ENCODE measurements at regions of chr2 and their contacts with region 1.

Region 1: DNA sequence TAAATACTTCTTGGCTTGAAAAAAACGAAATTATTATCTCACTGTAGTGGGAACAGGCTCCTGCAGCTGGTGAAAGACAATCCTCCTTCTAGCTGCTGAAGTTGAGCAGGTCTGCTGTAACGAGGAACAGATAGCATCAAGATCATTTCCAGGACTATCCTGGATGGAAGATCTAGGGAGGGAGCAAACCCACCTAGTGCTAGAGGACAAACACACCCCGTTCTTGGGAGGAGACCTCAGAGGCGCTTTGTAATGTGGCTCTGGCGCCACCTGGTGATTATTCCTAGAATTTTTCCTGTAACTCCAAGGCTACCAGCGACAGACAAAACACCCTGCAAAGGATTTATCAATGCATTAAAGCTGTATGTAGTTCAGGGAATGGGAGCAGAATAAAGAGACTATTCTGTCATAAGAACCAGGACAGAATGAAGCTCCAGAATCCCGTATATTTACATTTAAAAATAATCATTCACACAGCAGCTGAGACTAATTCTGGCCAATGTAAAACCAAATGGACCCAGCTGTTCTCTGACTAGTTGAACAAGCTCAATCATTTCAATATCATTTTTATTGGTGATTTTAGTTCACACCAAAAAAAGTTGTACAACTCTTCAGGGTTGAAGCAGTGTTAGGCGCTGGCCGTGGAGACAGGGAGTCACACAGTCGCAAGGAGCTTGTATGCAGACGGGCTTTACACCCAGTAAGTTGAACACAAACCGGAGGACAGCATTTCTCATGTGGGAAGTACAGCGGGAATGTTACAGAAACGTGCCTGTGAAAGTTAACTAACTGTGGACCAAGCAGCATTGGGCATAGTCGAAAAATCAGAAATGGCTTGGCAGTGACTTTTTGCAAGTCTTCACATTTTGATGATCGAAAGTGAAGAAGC is 290.3 kb downstream of the TRIB2 start:
- DNase-seq: peak; percentile 62
- ATAC-seq: peak; percentile 98
- H3K4me3 ChIP-seq: no peak overlapping the region
- H3K27ac ChIP-seq: no peak overlapping the region
- H3K4me1 ChIP-seq: no peaks in the 10 kb centered on the region
- H3K27me3 ChIP-seq: no peaks in the 10 kb centered on the region
- CTCF ChIP-seq: peak; percentile 88
- EP300 ChIP-seq: no peak
- POLR2A ChIP-seq: no peak
- RAD21 ChIP-seq: peak; percentile 74

Region 2: GRCh38 chr2:11863513-11864328 is 1143.4 kb before region 1 on chr2:
- CTCF ChIA-PET with region 1: interaction called, 3 read pairs
- POLR2A ChIA-PET with region 1: no interaction called
- in situ Hi-C with region 1: no loop called
- intact Hi-C with region 1: loop called (anchors 1 kb)
- DNase-seq: peak; percentile 86
- ATAC-seq: peak; percentile 96
- H3K4me3 ChIP-seq: no peak overlapping the region
- H3K27ac ChIP-seq: no peak overlapping the region
- H3K4me1 ChIP-seq: peaks cover 15% of the 10 kb centered on the region; the same call in 1 of the 2 replicates
- H3K27me3 ChIP-seq: peaks cover 0 to 20% of the 10 kb centered on the region in 2 experiments; a peak in 2 of 5 replicates
- CTCF ChIP-seq: peak; percentile 97
- EP300 ChIP-seq: no peak
- POLR2A ChIP-seq: no peak
- RAD21 ChIP-seq: peak; percentile 77

Region 3: DNA sequence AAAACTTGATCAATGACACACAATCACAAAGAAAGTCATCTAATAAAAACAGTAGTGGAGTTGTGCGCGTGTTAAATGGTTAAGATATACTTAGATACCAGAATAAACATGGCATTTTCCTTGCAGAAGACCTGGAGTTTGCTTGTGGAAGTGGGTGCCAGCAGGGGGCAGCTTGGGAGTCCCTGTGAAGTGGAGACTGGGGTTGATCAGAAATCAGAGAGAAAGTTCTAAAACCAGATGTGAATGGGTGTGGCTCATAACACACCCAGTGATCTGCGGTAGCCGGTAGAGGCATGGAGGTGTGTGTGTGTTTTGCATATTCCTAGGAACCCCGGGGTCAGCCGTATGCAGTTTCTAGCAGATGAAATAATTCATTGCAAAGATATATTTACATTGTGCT is 590.5 kb before region 1 on chr2:
- CTCF ChIA-PET with region 1: interaction called, 3 read pairs
- POLR2A ChIA-PET with region 1: no interaction called
- in situ Hi-C with region 1: no loop called
- intact Hi-C with region 1: loop called (anchors 1 kb)
- DNase-seq: peak; percentile 11
- ATAC-seq: peak; percentile 65
- H3K4me3 ChIP-seq: no peak overlapping the region
- H3K27ac ChIP-seq: no peak overlapping the region
- H3K4me1 ChIP-seq: no peaks in the 10 kb centered on the region
- H3K27me3 ChIP-seq: no peaks in the 10 kb centered on the region
- CTCF ChIP-seq: peak; percentile 52
- EP300 ChIP-seq: no peak
- POLR2A ChIP-seq: no peak
- RAD21 ChIP-seq: no peak

Region 4: DNA sequence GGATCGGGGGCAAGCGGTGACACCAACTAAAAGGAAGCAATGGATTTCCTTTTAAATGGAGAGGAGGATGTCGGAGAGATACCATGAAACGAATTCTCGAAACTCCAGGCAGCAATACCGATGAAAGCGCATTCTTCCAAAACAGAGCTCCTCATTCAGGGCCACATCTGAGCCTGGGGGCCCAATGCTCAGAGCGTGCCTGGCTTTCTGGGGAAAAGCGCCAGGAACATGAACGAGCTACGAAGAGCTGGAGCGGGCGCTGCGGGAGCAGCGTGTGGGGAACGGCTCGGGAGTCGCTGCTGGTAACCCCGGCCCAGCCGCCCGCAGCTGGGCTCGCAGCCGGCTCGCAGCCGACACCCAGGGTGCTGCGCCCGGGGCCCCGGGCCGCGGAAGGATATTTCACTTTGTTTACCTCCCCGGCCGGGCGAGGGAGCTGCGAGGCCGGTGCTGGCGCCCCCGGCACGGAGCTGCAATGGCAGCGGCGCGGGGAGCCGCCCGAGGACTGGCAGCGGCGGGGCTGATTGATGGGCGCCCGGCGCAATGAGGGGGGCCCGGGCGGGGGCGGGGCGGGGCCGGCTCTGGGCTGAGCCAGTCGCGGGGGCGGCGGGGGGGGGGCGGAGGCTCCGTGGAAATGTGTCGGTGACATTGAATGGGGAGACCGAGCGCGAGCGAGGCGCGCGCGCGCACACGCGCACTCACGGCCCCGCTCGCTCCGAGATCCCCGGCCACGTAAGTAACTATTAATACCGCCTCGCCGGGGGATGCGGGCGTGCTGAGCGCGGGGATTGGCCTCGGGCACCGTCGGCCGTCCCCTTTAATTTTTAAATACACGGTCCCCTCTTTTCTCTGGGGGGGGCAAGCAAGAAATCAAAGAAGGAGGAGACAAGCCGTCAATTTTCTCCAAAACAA is 290.5 kb before region 1 on chr2 and contains the start of gene TRIB2:
- CTCF ChIA-PET with region 1: no interaction called
- POLR2A ChIA-PET with region 1: no interaction called
- in situ Hi-C with region 1: no loop called
- intact Hi-C with region 1: loop called (anchors 5 kb)
- DNase-seq: peak; percentile 41
- ATAC-seq: peak; percentile 82
- H3K4me3 ChIP-seq: peak within 1 kb of the TSS; percentile 53 to 71 (median 55)
- H3K27ac ChIP-seq: no peak within 1 kb of the TSS
- H3K4me1 ChIP-seq: peaks cover 25% of the 10 kb centered on the region
- H3K27me3 ChIP-seq: peaks cover 6 to 45% of the 10 kb centered on the region in 2 experiments
- CTCF ChIP-seq: peak; percentile 48
- EP300 ChIP-seq: no peak
- POLR2A ChIP-seq: no peak
- RAD21 ChIP-seq: 0 out of 2 replicates have a peak, but pooled peaks have one; percentile 11
- total RNA-seq, gene TRIB2: 1.3 and 2.3 TPM in 2 replicates